GM12878 (cell line): ENCODE measurements at regions of chr6 and their contacts with region 1.

Region 1: DNA sequence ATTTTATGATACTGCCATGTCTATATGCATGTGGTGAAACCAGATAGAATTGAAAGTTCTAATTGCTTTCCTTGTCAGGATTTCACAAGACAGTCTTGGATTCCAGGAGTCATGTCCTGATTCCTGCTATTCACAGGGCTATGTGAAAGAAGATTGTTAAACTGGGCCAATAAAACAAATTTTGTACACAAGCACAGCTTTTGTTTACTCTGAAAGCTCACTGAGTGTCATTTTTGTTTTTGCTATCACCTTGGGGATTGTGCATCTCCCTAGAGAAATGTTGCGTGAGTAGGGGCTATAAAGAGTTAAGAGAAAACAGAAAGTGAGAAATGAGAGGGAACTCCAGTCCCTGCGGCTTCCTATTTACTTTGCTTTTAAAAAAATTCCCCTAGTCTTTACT is 627.5 kb downstream of the PKHD1 start:
- DNase-seq: peak; percentile 73
- ATAC-seq: peak; percentile 93
- H3K4me3 ChIP-seq: no peak overlapping the region
- H3K27ac ChIP-seq: peak overlapping the region; percentile 43; the same call in 1 of the 2 replicates
- H3K4me1 ChIP-seq: peaks cover 7% of the 10 kb centered on the region; the same call in 1 of the 2 replicates
- H3K27me3 ChIP-seq: no peaks in the 10 kb centered on the region
- CTCF ChIP-seq: no peak
- EP300 ChIP-seq: peak; percentile 85 to 95; a peak in 3 of 4 replicates
- POLR2A ChIP-seq: no peak
- RAD21 ChIP-seq: no peak

Region 2: GRCh38 chr6:50966532-50966931 is 493.4 kb before region 1 on chr6:
- CTCF ChIA-PET with region 1: no interaction called
- POLR2A ChIA-PET with region 1: no interaction called
- RAD21 ChIA-PET with region 1: no interaction called
- SMC1A ChIA-PET with region 1: no interaction called
- in situ Hi-C with region 1: no loop called
- intact Hi-C with region 1: loop called (anchors 10 kb)
- DNase-seq: no peak
- ATAC-seq: peak; percentile 93
- H3K4me3 ChIP-seq: no peak overlapping the region
- H3K27ac ChIP-seq: no peak overlapping the region
- H3K4me1 ChIP-seq: peaks cover 4% of the 10 kb centered on the region; the same call in 1 of the 2 replicates
- H3K27me3 ChIP-seq: no peaks in the 10 kb centered on the region
- CTCF ChIP-seq: no peak
- EP300 ChIP-seq: peak; percentile 13 to 78; a peak in 2 of 4 replicates
- POLR2A ChIP-seq: no peak
- RAD21 ChIP-seq: no peak

Region 3: GRCh38 chr6:51398064-51398705 is 61.8 kb before region 1 on chr6:
- CTCF ChIA-PET with region 1: interaction called, 3 read pairs
- POLR2A ChIA-PET with region 1: no interaction called
- RAD21 ChIA-PET with region 1: no interaction called
- SMC1A ChIA-PET with region 1: interaction called, 14 read pairs
- in situ Hi-C with region 1: no loop called
- intact Hi-C with region 1: loop called (anchors 1 kb)
- DNase-seq: peak; percentile 24
- ATAC-seq: peak; percentile 92
- H3K4me3 ChIP-seq: no peak overlapping the region
- H3K27ac ChIP-seq: no peak overlapping the region
- H3K4me1 ChIP-seq: no peaks in the 10 kb centered on the region
- H3K27me3 ChIP-seq: no peaks in the 10 kb centered on the region
- CTCF ChIP-seq: no peak
- EP300 ChIP-seq: no peak
- POLR2A ChIP-seq: no peak
- RAD21 ChIP-seq: no peak

Region 4: DNA sequence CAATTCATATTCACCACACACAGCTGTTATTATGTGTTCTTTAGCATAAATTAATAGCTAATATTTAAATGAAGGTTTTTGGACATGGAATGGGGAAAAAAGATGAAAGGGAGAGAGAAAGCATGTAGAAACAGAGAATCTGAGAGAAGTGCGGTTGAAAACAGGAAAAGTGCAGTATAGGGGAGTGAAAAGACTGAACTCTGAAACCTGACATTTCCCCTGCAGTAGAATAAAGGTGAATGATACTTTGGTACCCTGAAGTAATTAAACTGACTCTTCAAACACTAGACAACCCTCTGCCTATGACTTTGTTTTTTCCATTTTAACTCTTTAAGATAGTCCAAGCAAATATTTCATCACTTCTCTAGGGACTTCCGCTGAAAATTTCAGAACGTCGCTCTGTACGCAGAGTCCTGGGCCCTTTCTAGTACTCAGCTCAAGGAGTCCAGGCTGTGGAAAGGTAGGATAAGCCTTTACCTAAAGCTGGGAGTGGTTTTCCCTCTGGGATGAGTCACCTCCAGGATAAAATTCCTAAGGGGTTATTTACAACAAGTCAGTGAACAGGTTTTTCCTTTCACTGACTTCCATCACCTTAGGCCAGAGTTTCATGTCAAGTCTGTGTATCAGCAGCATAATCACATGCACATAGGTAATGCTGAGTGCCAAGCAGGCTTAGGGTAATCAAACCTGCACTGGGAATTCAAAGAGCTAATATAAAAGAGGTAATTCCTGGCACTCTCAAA is 13.0 kb after region 1 on chr6:
- CTCF ChIA-PET with region 1: interaction called, 5 read pairs
- POLR2A ChIA-PET with region 1: interaction called, 3 read pairs
- RAD21 ChIA-PET with region 1: interaction called, 3 read pairs
- SMC1A ChIA-PET with region 1: interaction called, 33 read pairs
- in situ Hi-C with region 1: no loop called
- intact Hi-C with region 1: no loop called
- DNase-seq: no peak
- ATAC-seq: peak; percentile 70
- H3K4me3 ChIP-seq: no peak overlapping the region
- H3K27ac ChIP-seq: no peak overlapping the region
- H3K4me1 ChIP-seq: peaks cover 5% of the 10 kb centered on the region; the same call in 1 of the 2 replicates
- H3K27me3 ChIP-seq: no peaks in the 10 kb centered on the region
- CTCF ChIP-seq: no peak
- EP300 ChIP-seq: no peak; a peak in 1 of 4 replicates
- POLR2A ChIP-seq: no peak
- RAD21 ChIP-seq: no peak

Region 5: GRCh38 chr6:51725155-51725554 is 265.2 kb after region 1 on chr6:
- CTCF ChIA-PET with region 1: no interaction called
- POLR2A ChIA-PET with region 1: no interaction called
- RAD21 ChIA-PET with region 1: no interaction called
- SMC1A ChIA-PET with region 1: no interaction called
- in situ Hi-C with region 1: no loop called
- intact Hi-C with region 1: no loop called
- DNase-seq: no peak
- ATAC-seq: no peak
- H3K4me3 ChIP-seq: no peak overlapping the region
- H3K27ac ChIP-seq: no peak overlapping the region
- H3K4me1 ChIP-seq: no peaks in the 10 kb centered on the region
- H3K27me3 ChIP-seq: no peaks in the 10 kb centered on the region; a peak in 1 of 4 replicates
- CTCF ChIP-seq: no peak
- EP300 ChIP-seq: no peak
- POLR2A ChIP-seq: no peak
- RAD21 ChIP-seq: no peak